AG04449 (cell line): ENCODE measurements at regions of chr1 and their contacts with region 1.

Region 1: DNA sequence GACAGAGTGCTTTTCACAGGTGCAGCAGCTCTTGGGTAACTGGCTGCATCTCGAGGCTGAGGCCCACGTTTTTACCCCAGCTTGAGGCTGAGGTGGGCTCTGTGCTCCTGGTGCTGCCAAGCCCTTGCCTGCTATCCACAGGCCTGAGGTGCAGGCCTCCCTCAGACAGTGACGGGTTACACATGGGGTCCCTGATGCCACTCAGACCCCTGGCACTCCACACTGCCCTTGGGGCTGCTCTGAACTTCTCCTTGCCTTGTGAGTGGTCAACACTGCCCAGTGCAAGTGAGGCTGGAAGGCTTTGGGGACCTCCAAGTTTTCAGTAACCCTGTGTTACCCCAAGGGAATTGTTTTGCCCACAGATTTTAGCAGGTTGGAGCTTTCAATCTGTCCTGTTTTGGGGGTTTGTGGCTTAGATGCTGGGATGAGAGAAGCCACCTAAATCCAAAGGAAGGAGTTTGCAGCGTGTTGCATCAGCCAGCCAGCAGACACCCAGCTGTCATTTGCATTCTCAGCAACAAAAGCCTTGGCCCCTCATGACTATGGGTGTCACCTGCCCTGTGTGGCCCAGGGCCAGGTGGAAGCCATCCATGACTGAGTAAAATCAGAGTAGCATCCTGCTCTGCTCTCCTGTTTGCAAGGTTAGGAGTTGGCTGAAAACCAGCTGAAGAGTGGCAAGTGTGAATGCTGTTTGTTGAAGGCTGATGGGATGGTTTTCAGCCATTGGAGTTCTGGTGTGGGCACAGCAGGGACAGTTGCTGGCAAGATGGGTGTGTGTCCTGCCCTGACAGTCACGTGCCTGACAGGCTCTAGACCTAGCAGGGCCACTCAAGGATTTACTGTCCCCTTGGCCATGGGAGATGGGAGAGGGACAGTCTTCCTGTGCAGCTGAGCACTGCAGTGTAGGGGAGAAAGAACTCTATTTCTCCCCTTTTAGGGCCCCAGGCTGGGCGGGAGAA is 3.2 kb downstream of the RNF187 start:
- DNase-seq: no peak
- H3K4me3 ChIP-seq: no peak overlapping the region
- CTCF ChIP-seq: no peak

Region 2: DNA sequence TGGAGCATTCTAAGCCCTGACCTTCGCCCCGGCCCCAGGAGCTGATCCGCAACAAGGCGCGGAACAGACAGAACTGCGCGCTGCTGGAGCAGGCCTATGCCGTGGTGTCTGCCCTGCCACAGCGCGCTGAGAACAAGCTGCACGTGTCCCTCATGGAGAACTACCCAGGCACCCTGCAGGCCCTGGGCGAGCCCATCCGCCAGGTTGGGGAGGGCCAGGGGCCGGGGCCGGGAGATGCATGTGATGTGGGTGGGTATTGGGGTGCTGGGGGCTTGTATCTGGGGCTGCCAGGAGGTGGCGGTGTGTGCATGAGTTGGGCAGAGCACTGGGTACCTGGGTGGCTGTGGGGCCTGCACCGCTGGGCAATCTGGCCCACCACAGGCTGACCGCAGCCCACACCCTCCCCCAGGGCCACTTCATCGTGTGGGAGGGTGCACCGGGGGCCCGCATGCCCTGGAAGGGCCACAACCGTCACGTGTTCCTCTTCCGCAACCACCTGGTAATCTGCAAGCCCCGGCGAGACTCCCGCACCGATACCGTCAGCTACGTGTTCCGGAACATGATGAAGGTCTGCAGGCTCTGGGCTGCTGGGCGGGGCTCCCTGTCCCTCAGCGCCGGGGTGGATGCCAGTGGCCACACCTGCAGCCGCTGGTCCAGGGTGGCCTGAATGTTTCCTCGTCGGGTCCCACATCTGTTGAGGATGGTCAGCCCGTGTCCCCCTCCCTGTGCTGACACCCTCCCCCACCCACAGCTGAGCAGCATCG is 149.5 kb before region 1 on chr1:
- CTCF ChIA-PET with region 1: no interaction called
- POLR2A ChIA-PET with region 1: no interaction called
- DNase-seq: no peak
- H3K4me3 ChIP-seq: no peak overlapping the region
- CTCF ChIP-seq: no peak

Region 3: DNA sequence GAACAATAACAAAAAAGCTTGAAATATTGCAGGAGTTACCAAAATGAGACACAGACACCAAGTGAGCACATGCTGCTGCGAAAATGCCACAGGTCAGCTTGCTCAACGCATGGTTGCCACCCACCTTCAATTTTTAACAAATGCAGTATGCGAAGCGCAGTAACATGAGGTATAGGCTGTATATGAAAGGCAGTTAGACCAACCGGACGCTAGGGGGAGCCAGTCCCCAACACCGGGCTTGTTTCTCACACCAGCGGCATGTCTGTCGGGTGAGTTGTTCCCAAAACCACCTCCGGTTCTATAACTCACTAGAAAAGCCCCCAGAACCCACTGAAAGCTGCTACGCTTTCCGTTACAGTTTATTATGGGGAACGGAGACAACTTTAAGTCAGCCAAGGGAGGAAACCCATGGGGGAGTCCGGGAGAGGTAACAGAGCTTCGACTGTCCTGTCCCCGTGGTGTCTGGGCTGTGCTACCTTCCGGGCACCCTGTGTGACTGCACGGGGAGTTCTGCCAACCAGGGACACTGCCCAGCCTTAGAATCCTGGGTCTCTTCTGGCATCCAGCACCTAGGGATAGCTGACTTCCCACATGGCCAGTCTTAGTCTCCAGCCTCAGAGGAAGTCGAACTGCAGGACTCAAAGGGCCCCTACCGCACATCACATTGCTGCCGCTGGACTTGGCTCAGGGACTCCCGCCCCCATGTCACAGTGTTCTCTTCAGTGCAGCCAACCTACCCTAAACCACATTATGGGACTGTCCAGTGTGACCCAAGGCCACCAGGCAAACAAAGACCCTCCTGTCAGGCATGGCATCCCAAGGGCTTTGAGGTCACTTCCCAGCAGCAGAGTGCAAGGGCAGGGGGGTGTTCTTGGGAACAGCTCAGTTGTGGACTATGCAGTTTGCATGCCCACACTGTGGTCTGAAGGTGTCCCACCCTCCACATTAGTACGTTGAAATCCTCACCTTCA is 10.8 kb after region 1 on chr1:
- CTCF ChIA-PET with region 1: interaction called, 57 read pairs
- POLR2A ChIA-PET with region 1: interaction called, 4 read pairs
- DNase-seq: no peak
- H3K4me3 ChIP-seq: peak overlapping the region; percentile 33
- CTCF ChIP-seq: peak; percentile 92